ENCODE measurements at regions of chr11 and their contacts with region 1.

Region 1: DNA sequence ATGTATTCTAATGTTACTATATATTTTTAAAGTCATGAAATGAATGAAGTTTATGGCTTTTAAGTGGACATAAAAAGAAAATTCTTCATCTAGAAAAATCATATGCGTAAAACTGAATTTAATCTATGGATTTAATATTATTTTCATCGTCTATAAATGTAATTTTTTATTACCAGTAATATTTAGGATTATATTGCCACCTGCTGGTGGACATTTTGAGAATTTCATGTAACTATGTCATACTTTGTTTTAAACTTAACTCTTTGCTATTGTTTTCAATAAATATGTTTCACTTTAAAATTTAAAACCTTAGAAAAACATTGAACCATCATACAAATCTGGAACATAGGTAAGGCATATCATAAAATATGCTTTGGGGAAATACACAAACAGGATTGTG is 66.5 kb upstream of the CEP126 start:
- DNase-seq: no peak
- ATAC-seq: no peak
- H3K4me3 ChIP-seq: no peak overlapping the region
- H3K27ac ChIP-seq: no peak overlapping the region
- H3K4me1 ChIP-seq: no peaks in the 10 kb centered on the region
- H3K27me3 ChIP-seq: no peaks in the 10 kb centered on the region
- CTCF ChIP-seq: no peak

Region 2: GRCh38 chr11:101428918-101429317 is 419.3 kb before region 1 on chr11:
- CTCF ChIA-PET with region 1: interaction called, 4 read pairs
- POLR2A ChIA-PET with region 1: no interaction called
- in situ Hi-C with region 1: no loop called
- intact Hi-C with region 1: loop called (anchors 1 kb)
- DNase-seq: no peak
- ATAC-seq: 0 out of 2 replicates have a peak, but pooled peaks have one; percentile 63
- H3K4me3 ChIP-seq: no peak overlapping the region
- H3K27ac ChIP-seq: no peak overlapping the region
- H3K4me1 ChIP-seq: no peaks in the 10 kb centered on the region
- H3K27me3 ChIP-seq: 0 out of 2 replicates have a peak, but pooled peaks cover 3% of the 10 kb centered on the region
- CTCF ChIP-seq: peak; percentile 63

Region 3: DNA sequence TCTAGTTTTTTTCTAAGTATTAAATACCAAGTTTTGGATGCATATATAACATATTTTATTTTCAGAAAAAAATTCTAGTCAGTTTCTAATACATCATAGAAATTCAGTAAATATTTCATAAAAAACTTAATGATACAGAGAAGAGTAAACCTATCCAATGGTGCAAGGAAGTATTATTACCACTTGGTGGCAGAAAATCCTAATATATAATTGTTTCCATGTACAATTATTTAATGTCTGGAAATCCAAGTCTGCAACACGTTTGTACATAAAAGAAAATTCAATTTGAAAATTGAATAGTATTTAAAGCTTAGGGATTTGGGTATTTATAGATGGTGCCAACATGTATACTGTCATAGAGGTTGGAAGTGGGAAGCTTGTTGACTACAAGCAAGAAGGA is 391.4 kb before region 1 on chr11:
- CTCF ChIA-PET with region 1: no interaction called
- POLR2A ChIA-PET with region 1: no interaction called
- in situ Hi-C with region 1: no loop called
- intact Hi-C with region 1: loop called (anchors 1 kb)
- DNase-seq: no peak
- ATAC-seq: 0 out of 2 replicates have a peak, but pooled peaks have one; percentile 63
- H3K4me3 ChIP-seq: no peak overlapping the region
- H3K27ac ChIP-seq: no peak overlapping the region
- H3K4me1 ChIP-seq: no peaks in the 10 kb centered on the region
- H3K27me3 ChIP-seq: no peaks in the 10 kb centered on the region
- CTCF ChIP-seq: peak; percentile 43; the same call in 1 of the 2 replicates

Region 4: GRCh38 chr11:101987370-101987769 is 139.1 kb after region 1 on chr11:
- CTCF ChIA-PET with region 1: no interaction called
- POLR2A ChIA-PET with region 1: no interaction called
- in situ Hi-C with region 1: no loop called
- intact Hi-C with region 1: no loop called
- DNase-seq: no peak
- ATAC-seq: no peak
- H3K4me3 ChIP-seq: no peak overlapping the region
- H3K27ac ChIP-seq: no peak overlapping the region
- H3K4me1 ChIP-seq: no peaks in the 10 kb centered on the region
- H3K27me3 ChIP-seq: no peaks in the 10 kb centered on the region
- CTCF ChIP-seq: peak; percentile 27; the same call in 1 of the 2 replicates

Measured in Panc1 (cell line).